ENCODE measurements at regions of chr22 and their contacts with region 1.

Region 1: GRCh38 chr22:40525249-40525884 is 111.2 kb downstream of the MRTFA start:
- DNase-seq: peak in 1 of 2 donors; percentile 72
- ATAC-seq: peak; percentile 45

Region 2: DNA sequence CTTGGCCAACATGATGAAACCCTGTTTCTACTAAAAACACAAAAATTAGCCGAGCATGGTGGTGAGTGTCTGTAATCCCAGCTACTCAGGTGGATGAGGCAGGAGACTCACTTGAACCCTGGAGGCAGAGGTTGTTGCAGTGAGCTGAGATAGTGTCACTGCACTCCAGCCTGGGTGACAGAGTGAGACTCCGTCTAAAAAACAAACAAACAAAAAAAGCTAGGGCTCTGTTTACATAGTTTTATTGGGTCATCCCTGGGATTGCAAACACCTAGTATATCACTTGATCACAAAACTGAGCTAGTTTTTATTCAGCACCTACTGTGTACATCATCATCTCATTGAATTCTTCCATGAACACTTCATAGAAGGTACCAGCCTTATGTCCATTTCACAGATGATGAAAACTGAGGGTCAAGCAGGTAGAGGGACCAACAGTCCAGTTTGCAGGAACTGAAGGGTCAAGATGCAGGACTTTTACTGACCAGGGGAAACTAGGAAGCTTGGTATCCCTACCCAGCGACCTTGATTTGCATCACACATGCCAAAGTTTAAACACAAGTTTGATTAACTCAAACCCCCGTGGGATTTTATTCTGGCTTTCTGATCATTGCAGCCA is 120.3 kb after region 1 on chr22:
- intact Hi-C with region 1: loop called in 1 of 2 experiments (anchors 5 kb)
- DNase-seq: no peak
- ATAC-seq: peak; percentile 8